ENCODE measurements at regions of chr1 and their contacts with region 1.

Region 1: DNA sequence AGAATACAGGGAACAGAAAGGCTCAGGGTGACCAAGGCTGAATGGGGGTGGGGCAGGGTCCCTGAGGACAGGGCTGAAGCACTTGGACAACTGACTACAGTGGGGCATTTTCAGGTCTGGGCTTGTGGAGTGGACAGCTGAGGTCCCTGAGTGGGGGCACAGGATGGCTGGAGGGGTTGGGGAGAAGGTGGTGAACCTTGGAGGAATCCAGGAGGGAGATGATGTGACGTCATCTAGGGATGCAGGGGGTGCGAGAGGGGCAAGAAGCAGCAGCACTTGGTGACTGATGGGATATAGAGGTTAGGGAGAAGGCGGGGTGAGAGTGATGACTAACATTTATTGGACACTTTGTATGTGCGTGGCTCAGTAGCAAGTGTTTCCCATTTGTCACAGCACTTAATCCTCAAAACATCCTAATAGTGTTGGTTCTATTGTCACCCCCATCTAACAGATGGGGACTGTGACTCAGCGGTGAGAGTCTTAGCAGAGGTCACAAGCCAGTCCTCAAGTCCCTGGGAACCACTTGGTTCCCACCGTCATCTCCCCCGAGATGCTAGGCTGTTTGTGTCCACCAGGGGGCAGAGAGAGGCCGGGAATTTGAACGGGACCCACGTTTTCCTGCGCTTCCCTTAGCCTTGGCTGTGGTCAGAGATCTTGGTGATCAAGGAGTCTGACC is 27.9 kb upstream of the BMP8B start:
- DNase-seq: peak; percentile 56
- H3K4me3 Mint-ChIP-seq: peak overlapping the region; percentile 52
- H3K27ac Mint-ChIP-seq: no peak overlapping the region
- H3K4me1 Mint-ChIP-seq: peaks cover 14% of the 10 kb centered on the region
- H3K27me3 Mint-ChIP-seq: peaks cover 12% of the 10 kb centered on the region

Region 2: GRCh38 chr1:39754906-39755504 is 61.5 kb before region 1 on chr1:
- CTCF ChIA-PET with region 1: no interaction called
- POLR2A ChIA-PET with region 1: no interaction called
- DNase-seq: no peak
- H3K4me3 Mint-ChIP-seq: no peak overlapping the region
- H3K27ac Mint-ChIP-seq: no peak overlapping the region
- H3K4me1 Mint-ChIP-seq: peaks cover 2% of the 10 kb centered on the region
- H3K27me3 Mint-ChIP-seq: no peaks in the 10 kb centered on the region

Region 3: DNA sequence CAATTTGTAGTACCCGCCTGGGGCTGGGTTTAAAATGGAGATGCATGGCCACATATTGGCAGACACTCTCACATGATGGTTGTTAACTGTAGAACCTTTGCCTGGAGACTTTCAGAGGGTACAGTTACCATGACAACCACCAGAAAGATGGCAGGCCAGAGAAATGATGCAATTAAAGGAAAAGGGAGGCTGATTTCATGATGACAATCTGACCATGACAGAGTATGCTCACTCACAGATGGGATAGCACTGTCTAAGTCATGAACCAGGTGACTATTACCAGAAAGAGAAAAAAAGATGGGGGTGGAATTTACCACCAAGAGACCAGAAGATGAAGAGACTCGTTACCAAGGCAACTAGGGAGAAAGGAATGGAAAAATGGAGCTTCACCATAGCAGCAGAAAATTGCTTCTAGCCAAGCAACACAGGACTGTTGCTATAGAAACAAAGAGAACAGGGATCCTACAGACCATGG is 70.2 kb after region 1 on chr1:
- CTCF ChIA-PET with region 1: no interaction called
- POLR2A ChIA-PET with region 1: no interaction called
- DNase-seq: no peak
- H3K4me3 Mint-ChIP-seq: no peak overlapping the region
- H3K27ac Mint-ChIP-seq: no peak overlapping the region
- H3K4me1 Mint-ChIP-seq: peaks cover 16% of the 10 kb centered on the region
- H3K27me3 Mint-ChIP-seq: peaks cover 5% of the 10 kb centered on the region

Region 4: GRCh38 chr1:39901698-39902459 is 85.3 kb after region 1 on chr1 and contains the start of gene MYCL:
- CTCF ChIA-PET with region 1: interaction called, 32 read pairs
- POLR2A ChIA-PET with region 1: interaction called, 18 read pairs
- DNase-seq: peak; percentile 76
- H3K4me3 Mint-ChIP-seq: peak within 1 kb of the TSS; percentile 66
- H3K27ac Mint-ChIP-seq: no peak within 1 kb of the TSS
- H3K4me1 Mint-ChIP-seq: peaks cover 5% of the 10 kb centered on the region
- H3K27me3 Mint-ChIP-seq: peaks cover 64% of the 10 kb centered on the region
- total RNA-seq, gene MYCL: 0.10 to 0.18 TPM

Region 5: GRCh38 chr1:39936724-39937491 is 120.4 kb after region 1 on chr1:
- CTCF ChIA-PET with region 1: no interaction called
- POLR2A ChIA-PET with region 1: no interaction called
- DNase-seq: no peak
- H3K4me3 Mint-ChIP-seq: no peak overlapping the region
- H3K27ac Mint-ChIP-seq: no peak overlapping the region
- H3K4me1 Mint-ChIP-seq: no peaks in the 10 kb centered on the region
- H3K27me3 Mint-ChIP-seq: peaks cover 2% of the 10 kb centered on the region

Region 6: GRCh38 chr1:39949871-39950448 is 133.4 kb after region 1 on chr1:
- CTCF ChIA-PET with region 1: no interaction called
- POLR2A ChIA-PET with region 1: no interaction called
- DNase-seq: no peak
- H3K4me3 Mint-ChIP-seq: no peak overlapping the region
- H3K27ac Mint-ChIP-seq: no peak overlapping the region
- H3K4me1 Mint-ChIP-seq: peaks cover 7% of the 10 kb centered on the region
- H3K27me3 Mint-ChIP-seq: peaks cover 4% of the 10 kb centered on the region